ENCODE measurements at regions of chr4 and their contacts with region 1.

Region 1: GRCh38 chr4:41990365-41991111 is at the start of gene SLC30A9:
- DNase-seq: peak; percentile 99
- H3K4me3 ChIP-seq: peak within 1 kb of the TSS; percentile 78 to 99 (median 84)
- H3K27ac ChIP-seq: peak within 1 kb of the TSS; percentile 87 to 90 (median 88)
- H3K4me1 ChIP-seq: peaks cover 27 to 34% (median 33%) of the 10 kb centered on the region in 4 donors
- H3K27me3 ChIP-seq: no peaks in the 10 kb centered on the region
- CTCF ChIP-seq: peak in 2 of 3 experiments; percentile 19 to 59
- EP300 ChIP-seq: no peak
- POLR2A ChIP-seq: peak; percentile 58
- total RNA-seq, gene SLC30A9: 32.4 to 45.4 (median 34.7) TPM

Region 2: DNA sequence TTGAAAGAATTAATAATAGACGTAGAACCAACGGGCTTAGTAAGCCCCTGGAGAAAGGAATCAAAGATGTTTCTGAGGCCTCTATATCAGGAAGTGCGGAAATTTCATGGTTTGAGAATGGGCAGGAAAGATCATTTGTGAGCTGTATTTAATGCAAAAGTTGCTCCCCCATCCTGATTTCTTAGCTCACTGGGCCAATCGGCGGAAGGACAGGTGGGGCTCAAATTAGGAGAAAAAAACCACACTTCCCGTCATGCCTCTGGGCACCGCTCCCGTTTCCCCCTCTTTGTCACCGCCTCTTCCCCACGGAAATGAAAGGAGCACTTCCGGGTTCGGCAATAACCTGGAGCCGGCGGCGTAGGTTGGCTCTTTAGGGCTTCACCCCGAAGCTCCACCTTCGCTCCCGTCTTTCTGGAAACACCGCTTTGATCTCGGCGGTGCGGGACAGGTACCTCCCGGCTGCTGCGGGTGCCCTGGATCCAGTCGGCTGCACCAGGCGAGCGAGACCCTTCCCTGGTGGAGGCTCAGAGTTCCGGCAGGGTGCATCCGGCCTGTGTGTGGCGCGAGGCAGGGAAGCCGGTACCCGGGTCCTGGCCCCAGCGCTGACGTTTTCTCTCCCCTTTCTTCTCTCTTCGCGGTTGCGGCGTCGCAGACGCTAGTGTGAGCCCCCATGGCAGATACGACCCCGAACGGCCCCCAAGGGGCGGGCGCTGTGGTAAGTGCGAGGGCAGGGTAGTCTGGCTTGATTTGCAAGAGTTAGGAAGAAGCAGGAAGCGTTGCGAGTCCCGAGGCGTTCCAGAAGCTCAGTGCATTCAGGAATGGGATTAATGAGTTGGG is 55.5 kb before region 1 on chr4 and contains the start of gene TMEM33:
- intact Hi-C with region 1: loop called (anchors 5 kb)
- DNase-seq: peak; percentile 95
- H3K4me3 ChIP-seq: peak within 1 kb of the TSS; percentile 70 to 97 (median 80)
- H3K27ac ChIP-seq: peak within 1 kb of the TSS; percentile 73 to 84 (median 79)
- H3K4me1 ChIP-seq: peaks cover 15 to 30% (median 28%) of the 10 kb centered on the region in 4 donors
- H3K27me3 ChIP-seq: no peaks in the 10 kb centered on the region
- CTCF ChIP-seq: peak in 2 of 3 experiments; percentile 26 to 31
- EP300 ChIP-seq: no peak
- POLR2A ChIP-seq: peak; percentile 65
- total RNA-seq, gene TMEM33: 15.4 to 34.8 (median 26.3) TPM

Measured in esophagus muscularis mucosa (tissue), 4 donors.